ENCODE measurements at regions of chr6 and their contacts with region 1.

Region 1: DNA sequence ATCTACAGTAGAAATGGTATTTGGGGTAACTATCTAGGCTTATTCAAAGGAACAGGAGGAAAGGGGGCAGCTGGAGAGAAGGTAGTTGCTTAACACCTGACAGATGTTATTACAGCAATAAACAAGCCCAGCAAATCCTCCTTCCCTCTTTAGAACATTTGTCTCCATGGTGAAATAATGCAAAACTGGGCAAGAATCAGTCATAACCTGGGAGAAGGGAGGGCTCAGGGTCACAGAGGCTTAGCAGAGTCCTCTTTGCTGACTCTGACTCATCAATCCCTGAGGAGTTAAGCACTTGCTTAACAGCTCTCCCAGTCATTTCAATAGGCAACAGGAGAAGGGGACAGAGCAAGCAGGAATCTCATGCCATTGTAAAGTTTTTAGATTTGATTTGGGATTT is 230.3 kb downstream of the IBTK start:
- DNase-seq: peak in 1 of 2 donors; percentile 88
- H3K4me3 ChIP-seq: peak overlapping the region; percentile 13 to 16
- H3K27ac ChIP-seq: peak overlapping the region; percentile 83 to 87
- H3K4me1 ChIP-seq: peaks cover 19 to 53% of the 10 kb centered on the region in 2 donors
- H3K27me3 ChIP-seq: no peaks in the 10 kb centered on the region
- CTCF ChIP-seq: no peak

Region 2: DNA sequence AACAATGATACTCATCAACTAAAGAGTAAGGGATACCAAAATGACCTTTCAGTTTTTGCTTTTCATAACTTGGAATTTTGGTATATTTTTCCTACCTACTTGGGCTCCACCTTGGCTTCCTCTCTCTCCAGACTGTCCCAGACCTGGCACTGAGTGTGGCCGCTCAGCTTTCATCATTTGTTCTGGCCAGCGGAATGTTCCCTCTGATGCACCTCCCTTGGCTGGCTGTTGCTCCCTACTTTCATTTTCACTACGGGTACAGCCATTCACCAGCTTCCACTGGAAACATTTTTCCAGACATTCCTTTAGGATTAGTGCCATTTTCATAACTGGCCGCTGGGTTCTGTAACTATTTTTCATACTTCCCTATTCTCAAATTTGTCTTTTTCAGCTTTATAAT is 752.2 kb before region 1 on chr6:
- intact Hi-C with region 1: loop called (anchors 10 kb)
- DNase-seq: peak in 1 of 2 donors; percentile 80
- H3K4me3 ChIP-seq: peak overlapping the region; percentile 43 to 57
- H3K27ac ChIP-seq: peak overlapping the region; percentile 68 to 69
- H3K4me1 ChIP-seq: peaks cover 0 to 2% of the 10 kb centered on the region in 2 donors
- H3K27me3 ChIP-seq: no peaks in the 10 kb centered on the region
- CTCF ChIP-seq: no peak

Region 3: GRCh38 chr6:81401970-81402690 is 615.2 kb before region 1 on chr6:
- intact Hi-C with region 1: loop called (anchors 5 kb)
- DNase-seq: no peak
- H3K4me3 ChIP-seq: peak overlapping the region in 1 of 2 donors; percentile 6
- H3K27ac ChIP-seq: peak overlapping the region; percentile 76 to 79
- H3K4me1 ChIP-seq: peaks cover 0 to 15% of the 10 kb centered on the region in 2 donors
- H3K27me3 ChIP-seq: no peaks in the 10 kb centered on the region
- CTCF ChIP-seq: no peak

Region 4: GRCh38 chr6:81683928-81684327 is 333.4 kb before region 1 on chr6:
- intact Hi-C with region 1: no loop called
- DNase-seq: no peak
- H3K4me3 ChIP-seq: no peak overlapping the region
- H3K27ac ChIP-seq: no peak overlapping the region
- H3K4me1 ChIP-seq: no peaks in the 10 kb centered on the region
- H3K27me3 ChIP-seq: no peaks in the 10 kb centered on the region
- CTCF ChIP-seq: no peak

Region 5: GRCh38 chr6:81844686-81845085 is 172.6 kb before region 1 on chr6:
- intact Hi-C with region 1: loop called (anchors 5 kb)
- DNase-seq: no peak
- H3K4me3 ChIP-seq: no peak overlapping the region
- H3K27ac ChIP-seq: peak overlapping the region; percentile 53 to 70
- H3K4me1 ChIP-seq: peaks cover 7 to 18% of the 10 kb centered on the region in 2 donors
- H3K27me3 ChIP-seq: no peaks in the 10 kb centered on the region
- CTCF ChIP-seq: no peak

Region 6: GRCh38 chr6:81859884-81860283 is 157.4 kb before region 1 on chr6:
- intact Hi-C with region 1: loop called (anchors 5 kb)
- DNase-seq: peak in 1 of 2 donors; percentile 80
- H3K4me3 ChIP-seq: no peak overlapping the region
- H3K27ac ChIP-seq: peak overlapping the region; percentile 70 to 76
- H3K4me1 ChIP-seq: peaks cover 8 to 54% of the 10 kb centered on the region in 2 donors
- H3K27me3 ChIP-seq: no peaks in the 10 kb centered on the region
- CTCF ChIP-seq: no peak

Region 7: GRCh38 chr6:81998432-81998831 is 18.9 kb before region 1 on chr6:
- intact Hi-C with region 1: loop called (anchors 2 kb)
- DNase-seq: no peak
- H3K4me3 ChIP-seq: no peak overlapping the region
- H3K27ac ChIP-seq: peak overlapping the region in 1 of 2 donors; percentile 65
- H3K4me1 ChIP-seq: peaks cover 9% of the 10 kb centered on the region in 2 donors
- H3K27me3 ChIP-seq: no peaks in the 10 kb centered on the region
- CTCF ChIP-seq: no peak

Region 8: GRCh38 chr6:82144007-82144851 is 126.9 kb after region 1 on chr6:
- intact Hi-C with region 1: loop called (anchors 10 kb)
- DNase-seq: peak; percentile 15 to 79
- H3K4me3 ChIP-seq: peak overlapping the region in 1 of 2 donors; percentile 46
- H3K27ac ChIP-seq: peak overlapping the region; percentile 56 to 64
- H3K4me1 ChIP-seq: peaks cover 0 to 13% of the 10 kb centered on the region in 2 donors
- H3K27me3 ChIP-seq: no peaks in the 10 kb centered on the region
- CTCF ChIP-seq: no peak

Region 9: GRCh38 chr6:82166493-82166892 is 149.2 kb after region 1 on chr6:
- intact Hi-C with region 1: no loop called
- DNase-seq: no peak
- H3K4me3 ChIP-seq: no peak overlapping the region
- H3K27ac ChIP-seq: no peak overlapping the region
- H3K4me1 ChIP-seq: no peaks in the 10 kb centered on the region
- H3K27me3 ChIP-seq: no peaks in the 10 kb centered on the region
- CTCF ChIP-seq: no peak

Region 10: GRCh38 chr6:82396964-82397751 is 379.9 kb after region 1 on chr6:
- intact Hi-C with region 1: no loop called
- DNase-seq: no peak
- H3K4me3 ChIP-seq: no peak overlapping the region
- H3K27ac ChIP-seq: peak overlapping the region in 1 of 2 donors; percentile 3
- H3K4me1 ChIP-seq: peaks cover 0 to 13% of the 10 kb centered on the region in 2 donors
- H3K27me3 ChIP-seq: no peaks in the 10 kb centered on the region
- CTCF ChIP-seq: no peak

Region 11: GRCh38 chr6:82430611-82431010 is 413.3 kb after region 1 on chr6:
- intact Hi-C with region 1: no loop called
- DNase-seq: no peak
- H3K4me3 ChIP-seq: no peak overlapping the region
- H3K27ac ChIP-seq: no peak overlapping the region
- H3K4me1 ChIP-seq: no peaks in the 10 kb centered on the region
- H3K27me3 ChIP-seq: no peaks in the 10 kb centered on the region
- CTCF ChIP-seq: no peak